A549 (cell line): ENCODE measurements at regions of chr17 and their contacts with region 1.

Region 1: DNA sequence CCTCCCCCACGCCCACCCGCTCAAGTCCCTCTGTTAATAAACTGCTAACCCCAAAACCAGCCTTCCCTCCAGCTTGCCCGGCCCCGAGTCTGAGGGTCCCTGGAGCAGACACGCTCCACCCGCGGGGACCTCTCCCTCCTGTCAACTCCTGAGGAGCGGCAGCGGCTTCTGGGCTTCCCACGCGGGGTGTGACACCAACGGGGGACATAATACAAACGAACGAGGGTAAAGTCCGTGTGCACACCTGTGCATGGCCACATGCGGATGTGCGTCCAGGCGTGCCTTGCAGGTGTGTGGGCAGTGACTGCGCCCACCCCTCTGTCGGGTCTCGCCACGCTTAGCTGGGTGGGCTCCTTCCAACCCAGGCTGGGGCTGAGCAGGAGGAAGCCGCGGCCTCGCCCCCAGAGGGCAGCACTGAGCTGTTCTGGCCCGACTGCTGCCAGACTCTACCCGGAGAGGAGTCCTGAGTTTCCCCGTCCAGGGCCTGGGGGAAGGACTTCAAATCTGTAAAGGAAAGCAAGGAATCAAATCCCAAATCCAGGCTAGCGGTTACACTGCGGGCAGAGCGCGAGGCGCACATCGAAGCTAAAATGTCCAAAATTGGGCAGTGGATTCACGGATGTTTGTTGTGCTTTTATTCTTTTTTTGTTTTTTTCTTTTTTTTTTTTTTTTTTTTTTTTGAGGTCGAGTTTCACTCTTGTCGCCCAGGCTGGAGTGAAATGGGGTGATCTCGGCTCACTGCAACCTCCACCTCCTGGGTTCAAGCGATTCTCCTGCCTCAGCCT is 24.2 kb upstream of the KRT17 start:
- DNase-seq: peak; percentile 92 to 93
- ATAC-seq: peak; percentile 84 to 94
- H3K4me3 ChIP-seq: peak overlapping the region; percentile 48
- H3K27ac ChIP-seq: peak overlapping the region; percentile 85 to 89
- H3K4me1 ChIP-seq: peaks cover 40% of the 10 kb centered on the region
- CTCF ChIP-seq: peak; percentile 93
- EP300 ChIP-seq: no peak
- POLR2A ChIP-seq: peak; percentile 38
- RAD21 ChIP-seq: peak; percentile 66 to 69

Region 2: DNA sequence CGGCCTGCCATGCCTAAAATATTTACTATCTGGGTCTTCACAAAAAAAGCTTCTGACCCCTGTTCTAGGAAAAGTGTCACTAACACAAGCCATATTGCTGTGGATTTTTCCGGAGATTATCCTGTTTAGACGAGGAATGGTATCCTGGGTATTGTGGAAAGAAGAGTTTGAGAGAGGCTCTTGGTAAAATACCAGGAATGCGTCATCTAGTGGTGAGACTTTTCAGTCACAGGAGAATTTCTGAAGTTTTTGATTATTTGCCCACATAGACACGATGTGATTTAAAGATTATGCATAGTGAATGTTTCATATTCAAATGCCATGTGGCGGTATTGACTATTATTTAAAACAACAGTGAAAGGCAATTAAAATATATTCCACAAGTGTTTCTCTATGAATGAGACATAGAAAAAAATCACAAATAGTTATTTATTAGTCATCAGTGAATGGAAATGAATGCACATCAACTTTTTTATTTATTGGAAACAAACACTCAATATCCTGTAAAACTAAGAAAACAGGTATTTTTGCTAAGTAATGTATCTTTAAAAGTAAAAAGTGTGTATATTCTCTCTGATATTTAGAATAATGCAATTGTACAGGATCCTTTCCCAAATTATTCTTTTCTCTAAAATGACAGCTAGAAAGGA is 856.7 kb before region 1 on chr17:
- CTCF ChIA-PET with region 1: interaction called, 16 read pairs
- POLR2A ChIA-PET with region 1: no interaction called
- DNase-seq: peak; percentile 45 to 61
- ATAC-seq: peak; percentile 73 to 74
- H3K4me3 ChIP-seq: no peak overlapping the region
- H3K27ac ChIP-seq: no peak overlapping the region
- H3K4me1 ChIP-seq: no peaks in the 10 kb centered on the region
- CTCF ChIP-seq: peak; percentile 98
- EP300 ChIP-seq: no peak
- POLR2A ChIP-seq: no peak
- RAD21 ChIP-seq: peak; percentile 83 to 86

Region 3: DNA sequence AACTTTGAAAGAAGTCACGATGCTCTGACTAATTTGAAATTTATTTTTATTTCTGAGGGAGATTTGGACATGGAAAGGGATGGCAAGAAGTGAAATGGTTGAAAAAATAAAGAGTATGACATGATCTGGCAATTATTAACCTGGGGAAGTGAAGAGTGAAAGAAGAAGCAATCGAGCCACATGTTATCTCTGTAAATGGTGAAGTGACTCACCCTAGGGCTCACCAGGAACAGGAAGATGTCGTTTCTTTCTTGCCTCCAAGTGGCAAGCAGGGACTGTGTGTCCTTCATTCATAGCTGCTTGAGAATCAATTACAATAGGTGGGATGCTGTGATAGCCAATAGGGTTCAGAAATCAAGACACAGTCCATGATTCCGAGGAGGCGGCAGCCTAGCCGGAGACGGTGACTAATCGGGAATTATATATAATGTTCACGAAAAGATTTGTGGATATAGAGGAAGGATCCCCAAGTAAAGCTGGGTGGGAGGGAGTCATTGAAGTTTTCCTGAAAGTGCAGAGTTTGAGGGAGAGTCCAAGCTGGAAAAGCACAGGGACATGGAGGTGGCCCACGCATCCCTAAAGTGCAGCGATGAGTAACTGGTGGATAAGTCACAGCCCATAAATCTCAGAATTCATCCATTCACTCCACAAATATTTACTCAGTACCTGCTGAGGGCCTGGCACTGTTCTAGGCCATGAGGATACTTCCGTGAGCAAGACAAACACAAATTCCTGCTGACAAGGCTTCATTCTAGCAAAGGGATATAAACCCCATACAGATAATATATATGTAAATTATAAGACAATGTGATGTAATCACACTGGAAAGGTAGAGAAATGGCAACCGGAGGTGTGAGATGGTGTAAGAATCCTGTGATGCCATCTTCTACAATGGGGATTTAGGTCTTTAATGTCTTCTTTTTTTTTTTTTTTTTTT is 745.2 kb before region 1 on chr17:
- CTCF ChIA-PET with region 1: interaction called, 107 read pairs
- POLR2A ChIA-PET with region 1: interaction called, 9 read pairs
- DNase-seq: peak; percentile 94 to 96
- ATAC-seq: peak; percentile 86 to 91
- H3K4me3 ChIP-seq: peak overlapping the region; percentile 33
- H3K27ac ChIP-seq: peak overlapping the region; percentile 91 to 93
- H3K4me1 ChIP-seq: peaks cover 34% of the 10 kb centered on the region
- CTCF ChIP-seq: no peak
- EP300 ChIP-seq: peak; percentile 71 to 74; a peak in 4 of 5 replicates
- POLR2A ChIP-seq: no peak
- RAD21 ChIP-seq: peak; percentile 2 to 29; a peak in 1 of 5 replicates

Region 4: GRCh38 chr17:41403798-41404671 is 244.6 kb before region 1 on chr17:
- CTCF ChIA-PET with region 1: interaction called, 10 read pairs
- POLR2A ChIA-PET with region 1: no interaction called
- DNase-seq: peak; percentile 77 to 82
- ATAC-seq: peak; percentile 75 to 81; a peak in 5 of 6 replicates
- H3K4me3 ChIP-seq: no peak overlapping the region
- H3K27ac ChIP-seq: peak overlapping the region; percentile 34 to 66; a peak in 5 of 6 replicates
- H3K4me1 ChIP-seq: peaks cover 18% of the 10 kb centered on the region
- CTCF ChIP-seq: no peak
- EP300 ChIP-seq: peak in 1 of 2 experiments; percentile 46; a peak in 1 of 5 replicates
- POLR2A ChIP-seq: no peak
- RAD21 ChIP-seq: no peak

Region 5: GRCh38 chr17:41521574-41522261 is 126.9 kb before region 1 on chr17:
- CTCF ChIA-PET with region 1: interaction called, 15 read pairs
- POLR2A ChIA-PET with region 1: no interaction called
- DNase-seq: peak; percentile 76 to 83
- ATAC-seq: peak; percentile 52 to 78; a peak in 5 of 6 replicates
- H3K4me3 ChIP-seq: no peak overlapping the region
- H3K27ac ChIP-seq: peak overlapping the region; percentile 60 to 82
- H3K4me1 ChIP-seq: peaks cover 29% of the 10 kb centered on the region
- CTCF ChIP-seq: no peak
- EP300 ChIP-seq: no peak
- POLR2A ChIP-seq: no peak
- RAD21 ChIP-seq: no peak

Region 6: GRCh38 chr17:41579484-41580243 is 68.9 kb before region 1 on chr17:
- CTCF ChIA-PET with region 1: interaction called, 49 read pairs
- POLR2A ChIA-PET with region 1: interaction called, 7 read pairs
- DNase-seq: peak; percentile 87 to 98
- ATAC-seq: peak; percentile 88 to 96
- H3K4me3 ChIP-seq: no peak overlapping the region; the same call in 2 of the 3 replicates
- H3K27ac ChIP-seq: peak overlapping the region; percentile 25 to 37; a peak in 3 of 6 replicates
- H3K4me1 ChIP-seq: peaks cover 6% of the 10 kb centered on the region
- CTCF ChIP-seq: peak; percentile 69
- EP300 ChIP-seq: no peak
- POLR2A ChIP-seq: no peak
- RAD21 ChIP-seq: peak; percentile 64 to 81

Region 7: GRCh38 chr17:41624208-41625101 is 24.1 kb before region 1 on chr17 and contains the start of gene KRT17:
- CTCF ChIA-PET with region 1: interaction called, 56 read pairs
- POLR2A ChIA-PET with region 1: no interaction called
- DNase-seq: no peak
- ATAC-seq: peak in 1 of 2 experiments; percentile 60; a peak in 2 of 6 replicates
- H3K4me3 ChIP-seq: no peak within 1 kb of the TSS
- H3K27ac ChIP-seq: no peak within 1 kb of the TSS
- H3K4me1 ChIP-seq: peaks cover 9% of the 10 kb centered on the region; the same call in 2 of the 3 replicates
- CTCF ChIP-seq: no peak
- EP300 ChIP-seq: no peak
- POLR2A ChIP-seq: no peak
- RAD21 ChIP-seq: no peak
- polyA plus RNA-seq, gene KRT17: 0.78 and 1.2 TPM in 2 replicates

Region 8: DNA sequence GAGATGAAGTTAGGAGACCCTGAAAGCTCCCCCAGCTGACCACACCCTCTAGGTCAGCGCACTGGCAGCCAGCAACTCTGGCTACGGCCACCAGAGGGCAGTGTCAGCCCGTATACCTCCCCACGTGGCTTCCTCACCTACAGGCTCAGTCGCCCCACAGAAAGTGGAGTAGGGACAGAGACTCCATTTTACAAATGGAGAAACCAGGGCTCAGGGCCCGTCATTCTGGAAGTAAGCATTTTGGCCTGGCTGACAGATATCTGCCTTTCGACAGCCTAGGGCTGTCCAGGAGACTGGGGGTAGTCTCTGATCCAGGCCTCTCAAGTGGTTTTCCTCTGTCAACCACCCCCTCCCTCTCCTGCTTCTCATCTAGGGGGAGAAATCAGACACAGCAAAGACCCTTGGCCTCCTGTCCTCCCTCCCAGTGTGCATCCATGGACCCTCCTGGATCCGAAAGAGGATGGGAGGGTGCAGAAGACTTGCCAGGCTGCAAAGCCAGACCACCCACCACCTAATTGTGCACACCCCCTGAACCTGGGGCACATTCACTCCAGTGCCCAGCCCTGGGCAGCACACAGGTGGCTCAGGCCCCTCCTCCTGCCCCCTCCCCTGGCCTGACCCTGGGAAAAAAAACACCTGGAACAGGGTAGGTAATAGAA is 89.6 kb after region 1 on chr17:
- CTCF ChIA-PET with region 1: no interaction called
- POLR2A ChIA-PET with region 1: no interaction called
- DNase-seq: peak; percentile 89 to 96
- ATAC-seq: peak; percentile 55 to 82
- H3K4me3 ChIP-seq: no peak overlapping the region
- H3K27ac ChIP-seq: peak overlapping the region; percentile 68 to 85
- H3K4me1 ChIP-seq: peaks cover 38% of the 10 kb centered on the region
- CTCF ChIP-seq: peak; percentile 99
- EP300 ChIP-seq: no peak
- POLR2A ChIP-seq: no peak
- RAD21 ChIP-seq: peak; percentile 100